ENCODE measurements at regions of chr17 and their contacts with region 1.

Region 1: GRCh38 chr17:42388381-42389134 is at the start of gene STAT3:
- DNase-seq: peak; percentile 100
- ATAC-seq: peak; percentile 97 to 98
- total RNA-seq, gene STAT3: 106 to 241 TPM

Region 2: GRCh38 chr17:42347198-42347597 is 41.4 kb before region 1 on chr17:
- intact Hi-C with region 1: loop called in 1 of 2 experiments (anchors 5 kb)
- DNase-seq: peak; percentile 48
- ATAC-seq: peak; percentile 55 to 75

Measured in left cardiac atrium (tissue), 4 donors.